ENCODE measurements at regions of chr16 and their contacts with region 1.

Region 1: DNA sequence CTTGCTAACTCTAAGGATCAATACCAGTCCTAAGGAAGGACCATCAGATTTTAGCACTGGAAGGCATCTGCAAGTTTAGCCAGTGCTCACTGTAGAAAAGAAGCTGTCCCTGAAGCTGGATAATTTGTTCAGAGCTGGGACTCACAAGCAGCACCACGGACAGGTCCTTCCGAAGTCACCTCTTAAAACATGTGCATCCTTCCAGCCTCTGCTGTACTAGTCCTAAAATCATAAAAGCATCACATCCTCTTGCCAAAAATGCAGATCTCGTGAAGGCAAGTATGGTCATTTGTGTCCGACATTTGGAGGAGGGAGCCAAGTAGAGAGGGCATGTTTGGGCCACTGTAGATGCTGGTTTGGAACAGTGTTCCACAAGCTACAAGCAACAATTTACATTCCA is 506.9 kb downstream of the RBFOX1 start:
- DNase-seq: no peak
- CTCF ChIP-seq: no peak

Region 2: DNA sequence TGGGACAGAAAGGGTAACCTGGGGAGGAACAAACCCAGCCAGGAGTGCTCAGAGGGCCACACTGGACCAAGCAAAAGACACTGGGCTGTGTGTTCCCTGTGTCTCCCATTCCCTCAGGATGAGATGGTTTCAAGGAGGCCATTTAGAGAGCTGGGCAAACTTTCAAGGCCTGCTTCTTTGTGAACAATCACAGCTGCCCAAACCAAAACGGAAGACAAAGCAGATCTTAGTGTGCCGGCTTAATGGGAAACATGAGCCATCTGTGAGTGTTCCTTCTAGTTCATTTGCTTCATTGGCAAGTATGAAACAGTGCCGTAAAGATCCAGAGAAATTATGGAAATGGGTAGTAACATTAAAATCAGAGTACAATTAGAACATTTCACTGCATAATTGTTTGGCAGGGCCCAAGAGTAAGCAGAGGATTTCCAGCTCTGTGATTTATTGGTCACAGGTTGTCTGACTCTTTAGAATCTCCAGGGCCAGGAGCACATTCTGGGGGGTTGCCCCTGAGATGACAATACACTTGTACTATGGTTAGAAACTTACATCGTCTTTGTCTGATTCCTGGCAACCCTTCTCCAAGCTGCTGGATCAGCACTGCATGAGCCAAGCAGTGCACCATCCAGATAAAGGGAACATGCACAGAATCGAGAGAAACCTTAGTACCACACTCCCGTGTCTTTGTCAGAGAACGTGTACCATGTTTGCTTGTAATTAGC is 94.9 kb before region 1 on chr16:
- in situ Hi-C with region 1: loop called (anchors 25 kb)
- DNase-seq: no peak
- CTCF ChIP-seq: no peak

Region 3: DNA sequence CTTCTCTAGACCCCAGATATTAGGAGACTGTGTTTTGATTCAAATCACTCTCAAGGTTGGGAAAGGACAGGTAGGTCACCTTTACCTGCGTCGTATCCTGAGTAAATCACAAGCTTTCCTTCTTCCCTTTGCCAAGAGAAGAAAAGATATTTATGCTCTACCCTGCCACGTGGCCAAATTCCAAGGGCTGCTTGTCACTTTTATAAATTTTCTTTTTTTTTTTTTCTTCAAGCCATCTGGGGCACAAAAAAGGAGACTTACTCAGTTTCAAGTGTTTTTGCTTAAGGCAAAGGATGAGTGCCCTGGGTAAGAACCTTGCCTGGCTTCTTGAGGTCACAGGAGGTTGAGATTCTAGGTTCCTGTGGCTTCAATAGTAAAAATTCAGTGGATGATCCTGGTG is 465.6 kb after region 1 on chr16:
- in situ Hi-C with region 1: no loop called
- DNase-seq: no peak
- CTCF ChIP-seq: no peak

Measured in GM13976 (cell line).